Endothelial cell of umbilical vein (primary cell): ENCODE measurements at regions of chr18 and their contacts with region 1.

Region 1: DNA sequence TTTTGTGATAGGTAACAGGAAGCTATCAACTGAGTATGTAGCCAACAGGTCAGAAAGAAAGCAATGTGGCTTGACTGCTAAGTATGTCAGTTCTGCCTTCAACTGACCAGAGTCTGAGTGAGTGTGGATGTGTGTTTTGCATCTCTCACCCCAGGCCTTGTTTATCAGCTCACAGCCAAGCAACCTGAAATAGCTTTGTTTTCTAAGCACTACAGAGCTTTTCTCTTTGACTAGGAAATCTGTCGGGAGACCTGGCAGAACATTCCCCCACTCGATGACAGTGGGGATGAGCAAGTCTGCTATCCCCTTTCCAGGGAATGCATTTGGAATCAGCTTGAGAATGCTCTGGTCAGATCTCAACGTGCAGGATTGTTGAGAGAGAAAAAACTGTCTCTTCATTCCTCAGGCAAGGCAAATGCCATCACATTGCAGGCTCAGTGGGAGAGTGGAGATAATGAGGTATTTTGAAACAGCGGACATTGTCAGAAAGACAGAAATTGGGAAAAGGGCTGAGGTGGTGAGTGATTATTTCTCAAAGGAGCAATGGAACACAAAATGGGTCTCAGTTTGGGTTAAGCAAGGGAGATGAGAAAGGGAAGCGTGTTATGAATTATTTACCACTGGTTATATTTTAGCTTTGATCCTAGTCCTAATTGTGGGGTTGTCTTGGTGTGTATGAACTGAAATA is 233.8 kb upstream of the PIK3C3 start:
- DNase-seq: no peak
- H3K4me3 ChIP-seq: no peak overlapping the region
- H3K27ac ChIP-seq: no peak overlapping the region
- H3K4me1 ChIP-seq: peaks cover 11% of the 10 kb centered on the region
- H3K27me3 ChIP-seq: no peaks in the 10 kb centered on the region
- CTCF ChIP-seq: no peak
- POLR2A ChIP-seq: no peak

Region 2: DNA sequence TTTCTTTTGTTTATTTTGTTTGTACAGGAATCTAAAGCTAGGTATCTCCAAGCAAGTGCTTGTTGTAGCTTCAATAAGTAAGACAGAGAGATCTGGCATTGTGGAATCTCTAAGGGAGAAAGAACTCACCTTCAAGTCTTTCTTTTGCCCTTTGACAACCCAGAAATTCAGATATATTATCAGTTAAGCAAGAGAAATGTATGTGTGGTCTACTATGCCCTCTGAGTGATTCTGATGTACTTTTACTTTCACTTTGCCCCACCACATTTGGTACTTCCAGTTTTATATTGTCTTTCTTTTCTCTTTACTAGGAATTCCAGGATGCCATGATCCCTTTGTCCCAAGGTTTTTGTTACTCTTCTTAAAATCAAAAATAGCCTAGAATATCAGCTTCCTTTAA is 25.8 kb before region 1 on chr18:
- CTCF ChIA-PET with region 1: no interaction called
- POLR2A ChIA-PET with region 1: no interaction called
- dilution Hi-C with region 1: no loop called
- intact Hi-C with region 1: loop called (anchors 2 kb)
- DNase-seq: peak; percentile 56
- H3K4me3 ChIP-seq: peak overlapping the region in 1 of 3 experiments; percentile 3
- H3K27ac ChIP-seq: no peak overlapping the region
- H3K4me1 ChIP-seq: no peaks in the 10 kb centered on the region
- H3K27me3 ChIP-seq: peaks cover 0 to 2% of the 10 kb centered on the region in 2 experiments
- CTCF ChIP-seq: no peak
- POLR2A ChIP-seq: no peak

Region 3: DNA sequence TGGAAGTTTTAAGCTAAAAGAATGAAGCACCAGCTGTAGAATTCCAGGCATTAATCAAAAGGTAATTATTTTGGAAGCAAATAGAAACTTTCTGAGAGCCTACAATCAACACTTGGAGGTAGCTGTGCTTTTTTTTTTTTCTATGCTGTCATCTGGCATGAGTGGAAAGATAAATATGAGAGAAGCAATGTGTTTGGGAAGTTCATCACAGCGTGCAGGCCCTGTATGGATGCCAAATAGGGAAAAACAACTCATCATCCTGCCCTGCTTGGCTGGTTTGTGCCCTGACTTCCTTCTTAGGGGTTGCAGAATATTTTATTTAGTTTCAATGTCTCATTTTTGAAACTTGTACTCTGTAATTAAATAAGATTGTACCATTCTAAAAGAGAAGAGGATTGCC is 671.2 kb after region 1 on chr18:
- CTCF ChIA-PET with region 1: no interaction called
- POLR2A ChIA-PET with region 1: no interaction called
- dilution Hi-C with region 1: no loop called
- intact Hi-C with region 1: no loop called
- DNase-seq: no peak
- H3K4me3 ChIP-seq: no peak overlapping the region
- H3K27ac ChIP-seq: no peak overlapping the region
- H3K4me1 ChIP-seq: no peaks in the 10 kb centered on the region
- H3K27me3 ChIP-seq: no peaks in the 10 kb centered on the region
- CTCF ChIP-seq: no peak
- POLR2A ChIP-seq: no peak